ENCODE measurements at regions of chr2 and their contacts with region 1.

Region 1: GRCh38 chr2:112601751-112602150 is 17.3 kb downstream of the CHCHD5 start:
- DNase-seq: no peak
- H3K4me3 ChIP-seq: no peak overlapping the region
- H3K27ac ChIP-seq: no peak overlapping the region
- H3K4me1 ChIP-seq: peaks cover 6% of the 10 kb centered on the region
- H3K27me3 ChIP-seq: no peaks in the 10 kb centered on the region
- CTCF ChIP-seq: no peak

Region 2: DNA sequence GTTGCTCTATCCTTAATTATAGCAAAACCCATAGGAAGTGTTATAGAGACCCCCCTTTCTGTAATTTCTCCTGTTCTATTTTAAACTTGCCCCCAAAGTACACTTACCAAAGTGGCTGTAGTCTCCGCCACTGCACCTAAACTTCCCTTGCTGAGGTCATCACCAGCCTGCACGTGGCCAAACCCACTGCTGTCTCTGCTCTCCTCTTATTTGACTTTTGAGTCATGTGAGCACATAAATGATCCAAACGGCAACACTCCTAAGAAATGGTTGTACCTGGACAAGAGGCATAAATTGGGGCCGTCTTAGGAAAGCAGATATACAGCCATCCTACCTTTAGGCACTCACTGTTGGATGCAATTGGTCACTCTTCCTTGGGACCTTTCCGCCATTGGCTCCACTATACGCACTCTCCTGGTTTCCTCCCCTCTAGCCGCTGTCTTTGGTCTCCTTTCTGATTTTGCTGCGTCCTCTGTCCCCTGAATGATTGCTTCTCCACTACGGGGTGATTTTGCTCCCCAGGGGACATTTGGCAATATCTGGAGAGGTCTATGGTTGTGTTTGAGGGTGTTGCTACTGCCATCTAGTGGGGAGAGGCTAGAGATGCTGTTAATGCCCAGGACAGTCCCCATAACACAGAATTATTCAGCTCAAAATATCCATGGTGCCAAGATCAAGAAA is 356.8 kb after region 1 on chr2:
- CTCF ChIA-PET with region 1: no interaction called
- POLR2A ChIA-PET with region 1: no interaction called
- intact Hi-C with region 1: loop called (anchors 1 kb)
- DNase-seq: peak; percentile 86
- H3K4me3 ChIP-seq: no peak overlapping the region
- H3K27ac ChIP-seq: no peak overlapping the region
- H3K4me1 ChIP-seq: no peaks in the 10 kb centered on the region
- H3K27me3 ChIP-seq: no peaks in the 10 kb centered on the region
- CTCF ChIP-seq: peak; percentile 90